ENCODE measurements at regions of chrX and their contacts with region 1.

Region 1: DNA sequence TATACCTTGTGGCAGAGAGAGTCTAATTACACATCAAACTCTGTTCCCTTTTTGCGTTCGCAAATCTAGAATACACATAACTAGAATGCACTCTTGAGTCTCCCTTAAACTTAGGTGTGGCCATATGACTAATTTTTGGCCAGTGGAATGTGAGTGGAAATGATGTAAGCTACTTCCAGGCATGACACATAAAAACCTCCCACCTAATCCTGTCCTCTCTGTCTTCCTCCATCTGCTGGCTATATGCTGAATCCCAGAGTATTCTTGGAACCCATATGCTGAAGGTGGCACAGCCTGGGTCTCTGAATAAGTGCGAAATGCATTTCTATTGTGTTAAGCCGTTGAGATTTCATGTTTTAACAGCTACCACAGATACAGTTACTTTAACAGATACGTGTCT is 269.9 kb upstream of the NRK start:
- DNase-seq: peak; percentile 94
- H3K4me3 ChIP-seq: no peak overlapping the region
- H3K27ac ChIP-seq: peak overlapping the region; percentile 89
- H3K4me1 ChIP-seq: peaks cover 19% of the 10 kb centered on the region
- H3K27me3 ChIP-seq: no peaks in the 10 kb centered on the region
- CTCF ChIP-seq: peak; percentile 47 to 55

Region 2: DNA sequence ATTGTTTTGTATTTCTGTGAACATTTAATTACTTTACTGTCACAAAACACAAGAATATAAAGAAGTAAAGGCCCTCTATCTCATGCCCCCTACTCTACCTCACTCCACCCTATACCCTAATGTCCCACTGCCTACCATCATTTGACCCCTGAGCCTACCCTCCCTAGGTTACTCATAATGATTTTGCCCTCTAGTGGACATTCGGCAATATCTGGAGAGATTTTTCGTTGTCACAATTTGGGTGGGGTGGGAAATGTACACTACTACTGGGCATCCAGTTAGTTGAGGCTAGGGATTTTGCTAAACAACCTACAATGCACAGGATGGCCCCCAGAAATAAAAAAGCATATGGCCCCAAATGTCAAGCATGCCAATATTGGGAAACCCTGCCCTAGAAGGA is 342.1 kb before region 1 on chrX:
- CTCF ChIA-PET with region 1: no interaction called
- dilution Hi-C with region 1: no loop called
- in situ Hi-C with region 1: no loop called
- intact Hi-C with region 1: no loop called
- DNase-seq: no peak
- H3K4me3 ChIP-seq: no peak overlapping the region
- H3K27ac ChIP-seq: no peak overlapping the region
- H3K4me1 ChIP-seq: no peaks in the 10 kb centered on the region
- H3K27me3 ChIP-seq: no peaks in the 10 kb centered on the region
- CTCF ChIP-seq: peak; percentile 19 to 21

Region 3: GRCh38 chrX:105460376-105460775 is 92.0 kb before region 1 on chrX:
- CTCF ChIA-PET with region 1: no interaction called
- dilution Hi-C with region 1: no loop called
- in situ Hi-C with region 1: no loop called
- intact Hi-C with region 1: loop called (anchors 5 kb)
- DNase-seq: peak; percentile 67
- H3K4me3 ChIP-seq: no peak overlapping the region
- H3K27ac ChIP-seq: peak overlapping the region; percentile 72
- H3K4me1 ChIP-seq: peaks cover 20% of the 10 kb centered on the region
- H3K27me3 ChIP-seq: no peaks in the 10 kb centered on the region
- CTCF ChIP-seq: no peak

Region 4: DNA sequence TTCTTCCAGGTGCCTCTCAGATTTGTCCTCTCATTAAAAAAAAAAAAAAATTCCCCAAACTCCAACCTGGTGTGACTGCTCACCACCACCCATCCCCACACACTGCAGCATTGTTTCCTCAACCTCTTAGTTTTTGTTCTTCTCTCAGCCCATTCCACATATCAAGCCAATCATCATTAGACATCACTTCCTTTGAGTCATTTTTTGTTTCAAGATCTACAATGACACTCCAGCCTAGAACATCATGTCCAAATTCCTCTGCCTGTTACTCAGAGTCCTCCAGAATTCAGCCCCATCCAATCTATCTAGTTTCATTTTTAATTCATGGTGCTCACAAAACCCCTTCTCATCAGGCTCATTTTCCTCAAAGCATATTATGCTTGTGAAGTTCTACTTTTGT is 69.4 kb before region 1 on chrX:
- CTCF ChIA-PET with region 1: no interaction called
- dilution Hi-C with region 1: no loop called
- in situ Hi-C with region 1: no loop called
- intact Hi-C with region 1: loop called (anchors 2 kb)
- DNase-seq: peak; percentile 95
- H3K4me3 ChIP-seq: peak overlapping the region in 1 of 3 experiments; percentile 2
- H3K27ac ChIP-seq: peak overlapping the region; percentile 99
- H3K4me1 ChIP-seq: peaks cover 43% of the 10 kb centered on the region
- H3K27me3 ChIP-seq: no peaks in the 10 kb centered on the region
- CTCF ChIP-seq: no peak

Region 5: GRCh38 chrX:105645667-105646357 is 93.4 kb after region 1 on chrX:
- CTCF ChIA-PET with region 1: no interaction called
- dilution Hi-C with region 1: no loop called
- in situ Hi-C with region 1: no loop called
- intact Hi-C with region 1: loop called (anchors 5 kb)
- DNase-seq: peak; percentile 74
- H3K4me3 ChIP-seq: no peak overlapping the region
- H3K27ac ChIP-seq: no peak overlapping the region
- H3K4me1 ChIP-seq: peaks cover 9% of the 10 kb centered on the region
- H3K27me3 ChIP-seq: no peaks in the 10 kb centered on the region
- CTCF ChIP-seq: no peak

Region 6: GRCh38 chrX:105701084-105702055 is 149.0 kb after region 1 on chrX:
- CTCF ChIA-PET with region 1: no interaction called
- dilution Hi-C with region 1: no loop called
- in situ Hi-C with region 1: no loop called
- intact Hi-C with region 1: loop called (anchors 1 kb)
- DNase-seq: peak; percentile 21
- H3K4me3 ChIP-seq: no peak overlapping the region
- H3K27ac ChIP-seq: no peak overlapping the region
- H3K4me1 ChIP-seq: peaks cover 7% of the 10 kb centered on the region
- H3K27me3 ChIP-seq: no peaks in the 10 kb centered on the region
- CTCF ChIP-seq: peak; percentile 13 to 44